Mammary epithelial cell (primary cell): ENCODE measurements at regions of chr11 and their contacts with region 1.

Region 1: GRCh38 chr11:119101759-119102423 is at the start of gene DPAGT1:
- DNase-seq: peak; percentile 97
- H3K4me3 ChIP-seq: peak within 1 kb of the TSS; percentile 80 to 81 (median 81)
- H3K27ac ChIP-seq: peak within 1 kb of the TSS; percentile 91
- H3K4me1 ChIP-seq: peaks cover 19% of the 10 kb centered on the region
- H3K27me3 ChIP-seq: no peaks in the 10 kb centered on the region
- CTCF ChIP-seq: no peak
- total RNA-seq, gene DPAGT1: 22.2 to 49.3 TPM

Region 2: DNA sequence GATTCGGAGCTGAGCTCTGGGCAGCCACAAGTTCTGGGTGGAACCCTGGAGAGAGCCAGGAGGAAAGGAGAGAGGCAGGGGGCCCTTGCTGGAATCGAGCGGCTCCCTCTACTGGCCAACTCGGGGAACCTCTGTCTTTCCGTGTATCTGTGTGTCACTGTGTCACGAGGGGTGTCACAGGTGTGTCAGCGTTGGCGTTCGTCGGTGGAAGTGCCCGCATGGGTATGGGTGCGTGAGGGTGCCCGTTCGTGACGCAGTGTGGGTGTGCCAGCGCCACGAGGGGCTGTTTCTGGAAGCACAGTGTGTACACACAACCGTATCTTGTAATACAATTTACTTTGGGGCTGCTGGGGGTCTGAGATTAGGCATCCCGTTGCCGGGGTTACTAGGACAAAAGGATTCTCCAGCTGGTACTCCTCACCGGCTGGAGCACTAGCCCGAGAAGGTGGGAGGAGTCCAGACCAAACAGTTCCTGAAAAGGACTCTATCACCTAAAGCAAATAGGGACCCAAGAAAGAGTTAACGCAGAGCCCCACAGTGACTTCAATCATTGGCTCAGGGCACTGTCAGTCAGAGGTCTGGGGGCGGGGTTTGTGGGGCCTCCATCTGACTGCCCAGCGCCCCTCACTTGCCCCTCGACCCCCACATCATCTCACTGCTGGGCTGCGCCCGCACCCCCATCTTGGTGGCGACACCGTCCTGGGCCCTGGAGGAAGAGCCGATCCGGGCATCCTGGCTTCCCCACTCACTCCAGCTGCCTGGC is 173.6 kb before region 1 on chr11:
- CTCF ChIA-PET with region 1: no interaction called
- dilution Hi-C with region 1: no loop called
- in situ Hi-C with region 1: no loop called
- intact Hi-C with region 1: loop called (anchors 5 kb)
- DNase-seq: peak; percentile 92
- H3K4me3 ChIP-seq: peak overlapping the region; percentile 77 to 85 (median 79)
- H3K27ac ChIP-seq: peak overlapping the region; percentile 84
- H3K4me1 ChIP-seq: peaks cover 44% of the 10 kb centered on the region
- H3K27me3 ChIP-seq: no peaks in the 10 kb centered on the region
- CTCF ChIP-seq: peak; percentile 94 to 95

Region 3: GRCh38 chr11:119121008-119121810 is 19.3 kb after region 1 on chr11 and contains the start of gene HINFP:
- CTCF ChIA-PET with region 1: no interaction called
- dilution Hi-C with region 1: no loop called
- in situ Hi-C with region 1: no loop called
- intact Hi-C with region 1: loop called (anchors 2 kb)
- DNase-seq: peak; percentile 99
- H3K4me3 ChIP-seq: peak within 1 kb of the TSS; percentile 77 to 99 (median 94)
- H3K27ac ChIP-seq: peak within 1 kb of the TSS; percentile 79
- H3K4me1 ChIP-seq: peaks cover 12% of the 10 kb centered on the region
- H3K27me3 ChIP-seq: no peaks in the 10 kb centered on the region
- CTCF ChIP-seq: no peak
- total RNA-seq, gene HINFP: 23.7 to 26.8 TPM

Region 4: GRCh38 chr11:119323538-119324033 is 221.7 kb after region 1 on chr11:
- CTCF ChIA-PET with region 1: no interaction called
- dilution Hi-C with region 1: no loop called
- in situ Hi-C with region 1: no loop called
- intact Hi-C with region 1: loop called (anchors 1 kb)
- DNase-seq: peak; percentile 52
- H3K4me3 ChIP-seq: no peak overlapping the region
- H3K27ac ChIP-seq: no peak overlapping the region
- H3K4me1 ChIP-seq: peaks cover 29% of the 10 kb centered on the region
- H3K27me3 ChIP-seq: no peaks in the 10 kb centered on the region
- CTCF ChIP-seq: peak; percentile 78 to 85

Region 5: DNA sequence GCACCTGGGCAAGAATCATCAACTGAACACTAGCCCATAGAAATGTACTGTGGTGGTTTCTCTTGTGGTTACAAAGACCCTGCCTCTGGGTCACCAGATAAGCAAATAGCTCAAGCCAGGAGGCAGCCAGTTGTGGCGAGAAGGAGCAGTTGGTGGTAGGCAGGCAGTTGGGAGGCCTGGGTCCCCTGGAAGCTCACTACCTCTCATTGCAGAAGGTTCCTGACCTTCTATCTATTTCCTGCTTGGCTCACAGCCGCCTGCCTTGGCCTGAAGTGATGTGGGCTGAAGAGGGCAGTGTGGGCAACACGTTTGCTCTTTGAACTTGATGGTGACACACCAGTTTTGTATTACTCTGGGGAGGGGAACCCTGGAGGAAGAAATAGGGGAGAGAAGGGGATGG is 592.4 kb after region 1 on chr11:
- CTCF ChIA-PET with region 1: no interaction called
- dilution Hi-C with region 1: no loop called
- in situ Hi-C with region 1: no loop called
- intact Hi-C with region 1: loop called (anchors 10 kb)
- DNase-seq: peak; percentile 56
- H3K4me3 ChIP-seq: no peak overlapping the region
- H3K27ac ChIP-seq: peak overlapping the region; percentile 97
- H3K4me1 ChIP-seq: peaks cover 99% of the 10 kb centered on the region
- H3K27me3 ChIP-seq: no peaks in the 10 kb centered on the region
- CTCF ChIP-seq: peak; percentile 14 to 35